Left cardiac atrium (tissue), 4 donors: ENCODE measurements at regions of chr7 and their contacts with region 1.

Region 1: GRCh38 chr7:101542527-101543241 is 86.4 kb downstream of the MYL10 start:
- DNase-seq: peak; percentile 65
- ATAC-seq: peak; percentile 53 to 54

Region 2: GRCh38 chr7:101363734-101364374 is 178.8 kb before region 1 on chr7:
- intact Hi-C with region 1: loop called (anchors 5 kb)
- DNase-seq: peak; percentile 74
- ATAC-seq: peak; percentile 94 to 95